HEK293 (cell line): ENCODE measurements at regions of chr9 and their contacts with region 1.

Region 1: DNA sequence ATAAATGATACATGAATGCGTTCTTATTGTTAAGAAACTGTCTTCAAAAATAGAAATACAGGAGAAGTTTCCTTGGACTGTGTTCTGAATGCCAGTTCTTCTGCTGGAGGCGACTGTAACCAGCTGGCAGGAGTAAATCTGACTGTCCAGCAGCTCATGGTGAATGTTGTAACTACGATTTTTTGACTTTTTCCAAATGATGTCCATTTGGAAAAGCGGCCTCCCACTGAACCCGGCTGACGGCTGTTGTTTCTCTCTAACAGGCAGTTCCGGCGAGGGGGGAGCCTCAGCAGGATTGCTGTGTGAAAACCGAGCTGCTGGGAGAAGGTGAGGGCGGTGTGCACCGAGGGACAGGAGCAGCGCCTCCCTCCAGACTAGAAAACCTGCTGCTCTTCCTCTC is 91.9 kb downstream of the EHMT1 start:
- H3K4me3 ChIP-seq: no peak overlapping the region
- H3K27ac ChIP-seq: no peak overlapping the region
- H3K4me1 ChIP-seq: no peaks in the 10 kb centered on the region
- CTCF ChIP-seq: no peak

Region 2: GRCh38 chr9:137694967-137695879 is 15.5 kb before region 1 on chr9:
- CTCF ChIA-PET with region 1: interaction called, 15 read pairs
- POLR2A ChIA-PET with region 1: interaction called, 4 read pairs
- H3K4me3 ChIP-seq: no peak overlapping the region
- H3K27ac ChIP-seq: no peak overlapping the region
- H3K4me1 ChIP-seq: no peaks in the 10 kb centered on the region
- CTCF ChIP-seq: peak; percentile 50; the same call in 1 of the 2 replicates